Pancreas (tissue), 10 donors: ENCODE measurements at regions of chr1 and their contacts with region 1.

Region 1: GRCh38 chr1:227946624-227947385 is 927 bp downstream of the WNT9A start:
- DNase-seq: peak; percentile 83 to 95 (median 91)
- ATAC-seq: peak; percentile 84 to 94 (median 88)
- H3K4me3 ChIP-seq: peak overlapping the region; percentile 21 to 45 (median 30)
- H3K27ac ChIP-seq: peak overlapping the region; percentile 65 to 91 (median 78)
- H3K4me1 ChIP-seq: peaks cover 13 to 15% (median 14%) of the 10 kb centered on the region in 3 donors
- H3K27me3 ChIP-seq: no peaks in the 10 kb centered on the region
- CTCF ChIP-seq: peak; percentile 52 to 70 (median 65)

Region 2: DNA sequence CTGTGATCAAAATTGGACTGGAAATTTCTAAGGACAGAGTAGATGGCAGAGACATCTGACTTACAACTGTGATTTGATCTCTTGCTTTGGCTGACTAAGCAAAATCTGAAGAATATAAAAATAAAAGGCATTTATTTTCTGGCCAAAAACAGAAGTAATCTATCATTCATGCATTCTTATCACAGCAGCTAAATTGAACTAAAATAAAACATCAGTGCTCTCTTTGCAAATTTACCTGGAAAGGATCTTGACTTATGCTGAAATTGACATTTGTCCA is 464.8 kb before region 1 on chr1:
- intact Hi-C with region 1: loop called in 2 of 3 experiments (anchors 5 to 10 kb)
- DNase-seq: no peak
- ATAC-seq: no peak
- H3K4me3 ChIP-seq: no peak overlapping the region
- H3K27ac ChIP-seq: no peak overlapping the region
- H3K4me1 ChIP-seq: no peaks in the 10 kb centered on the region
- H3K27me3 ChIP-seq: no peaks in the 10 kb centered on the region
- CTCF ChIP-seq: no peak

Region 3: GRCh38 chr1:227489572-227489971 is 457.2 kb before region 1 on chr1:
- intact Hi-C with region 1: loop called in 2 of 3 experiments (anchors 5 to 10 kb)
- DNase-seq: no peak
- ATAC-seq: no peak
- H3K4me3 ChIP-seq: no peak overlapping the region
- H3K27ac ChIP-seq: no peak overlapping the region
- H3K4me1 ChIP-seq: no peaks in the 10 kb centered on the region
- H3K27me3 ChIP-seq: no peaks in the 10 kb centered on the region
- CTCF ChIP-seq: no peak

Region 4: GRCh38 chr1:227762233-227762911 is 184.4 kb before region 1 on chr1:
- intact Hi-C with region 1: loop called (anchors 2 to 10 kb)
- DNase-seq: peak; percentile 73 to 95 (median 86)
- ATAC-seq: peak; percentile 89 to 95 (median 90)
- H3K4me3 ChIP-seq: no peak overlapping the region
- H3K27ac ChIP-seq: no peak overlapping the region
- H3K4me1 ChIP-seq: peaks cover 0 to 4% (median 0%) of the 10 kb centered on the region in 3 donors
- H3K27me3 ChIP-seq: no peaks in the 10 kb centered on the region
- CTCF ChIP-seq: peak; percentile 64 to 85 (median 73)

Region 5: GRCh38 chr1:228043281-228043890 is 96.6 kb after region 1 on chr1:
- intact Hi-C with region 1: no loop called
- DNase-seq: peak in 1 of 6 donors; percentile 21
- ATAC-seq: peak in 2 of 4 donors; percentile 51 to 61
- H3K4me3 ChIP-seq: no peak overlapping the region
- H3K27ac ChIP-seq: no peak overlapping the region
- H3K4me1 ChIP-seq: no peaks in the 10 kb centered on the region
- H3K27me3 ChIP-seq: no peaks in the 10 kb centered on the region
- CTCF ChIP-seq: no peak